ENCODE measurements at regions of chr3 and their contacts with region 1.

Region 1: DNA sequence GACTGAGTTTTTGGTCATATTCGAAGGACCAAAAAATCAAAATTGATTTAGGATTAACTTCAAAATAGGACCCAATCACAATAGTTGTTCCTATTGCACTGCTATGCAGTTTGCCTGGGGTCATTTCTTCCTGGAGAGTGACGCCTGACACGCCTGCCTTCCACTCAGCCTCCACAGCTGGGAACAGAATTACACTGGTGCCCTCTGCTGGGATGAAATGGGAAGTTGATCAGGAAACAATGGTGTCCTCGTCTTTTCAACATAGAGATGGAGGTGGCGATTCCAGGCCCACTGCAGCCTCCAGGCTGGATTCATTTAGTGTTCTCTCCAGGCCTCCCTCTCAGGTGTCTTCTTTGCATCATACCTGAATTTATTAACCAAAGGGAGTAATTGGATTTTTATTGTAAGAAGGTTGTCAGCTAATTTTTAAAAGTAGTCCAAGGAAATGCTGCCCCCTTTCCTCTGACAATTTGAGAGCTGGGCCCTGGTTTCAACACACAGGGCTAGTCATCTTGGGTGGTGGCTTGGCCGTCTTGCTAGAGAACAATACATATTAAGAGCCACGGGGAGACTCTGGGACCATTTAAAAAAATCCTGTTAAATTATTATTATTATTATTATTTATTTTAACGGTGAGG is 69.7 kb downstream of the GAP43 start:
- DNase-seq: peak; percentile 80
- ATAC-seq: peak; percentile 94
- H3K4me3 Mint-ChIP-seq: no peak overlapping the region
- H3K27ac Mint-ChIP-seq: no peak overlapping the region
- H3K4me1 Mint-ChIP-seq: peaks cover 25% of the 10 kb centered on the region
- H3K27me3 Mint-ChIP-seq: no peaks in the 10 kb centered on the region
- CTCF ChIP-seq: peak; percentile 64

Region 2: GRCh38 chr3:115217678-115218451 is 475.1 kb before region 1 on chr3:
- CTCF ChIA-PET with region 1: interaction called, 10 read pairs
- POLR2A ChIA-PET with region 1: interaction called, 6 read pairs
- DNase-seq: peak; percentile 20
- ATAC-seq: peak; percentile 86
- H3K4me3 Mint-ChIP-seq: no peak overlapping the region
- H3K27ac Mint-ChIP-seq: no peak overlapping the region
- H3K4me1 Mint-ChIP-seq: peaks cover 17% of the 10 kb centered on the region
- H3K27me3 Mint-ChIP-seq: no peaks in the 10 kb centered on the region
- CTCF ChIP-seq: peak; percentile 60

Region 3: GRCh38 chr3:115359536-115359935 is 333.5 kb before region 1 on chr3:
- CTCF ChIA-PET with region 1: no interaction called
- POLR2A ChIA-PET with region 1: no interaction called
- DNase-seq: no peak
- ATAC-seq: no peak
- H3K4me3 Mint-ChIP-seq: no peak overlapping the region
- H3K27ac Mint-ChIP-seq: no peak overlapping the region
- H3K4me1 Mint-ChIP-seq: peaks cover 13% of the 10 kb centered on the region
- H3K27me3 Mint-ChIP-seq: no peaks in the 10 kb centered on the region
- CTCF ChIP-seq: no peak

Region 4: GRCh38 chr3:115595611-115596275 is 97.3 kb before region 1 on chr3:
- CTCF ChIA-PET with region 1: no interaction called
- POLR2A ChIA-PET with region 1: no interaction called
- DNase-seq: no peak
- ATAC-seq: no peak
- H3K4me3 Mint-ChIP-seq: no peak overlapping the region
- H3K27ac Mint-ChIP-seq: no peak overlapping the region
- H3K4me1 Mint-ChIP-seq: no peaks in the 10 kb centered on the region
- H3K27me3 Mint-ChIP-seq: no peaks in the 10 kb centered on the region
- CTCF ChIP-seq: no peak